Stomach (tissue), 19 donors: ENCODE measurements at regions of chr20 and their contacts with region 1.

Region 1: GRCh38 chr20:19212821-19213502 is 520 bp downstream of the SLC24A3 start:
- DNase-seq: peak; percentile 83 to 92
- H3K4me3 ChIP-seq: peak overlapping the region; percentile 54 to 76 (median 64)
- H3K27ac ChIP-seq: peak overlapping the region; percentile 47 to 75 (median 72)
- H3K4me1 ChIP-seq: peaks cover 6 to 38% (median 23%) of the 10 kb centered on the region in 4 donors
- H3K27me3 ChIP-seq: peaks cover 0 to 32% (median 10%) of the 10 kb centered on the region in 3 donors
- CTCF ChIP-seq: peak in 5 of 7 experiments; percentile 28 to 53 (median 35)
- EP300 ChIP-seq: no peak
- POLR2A ChIP-seq: no peak

Region 2: DNA sequence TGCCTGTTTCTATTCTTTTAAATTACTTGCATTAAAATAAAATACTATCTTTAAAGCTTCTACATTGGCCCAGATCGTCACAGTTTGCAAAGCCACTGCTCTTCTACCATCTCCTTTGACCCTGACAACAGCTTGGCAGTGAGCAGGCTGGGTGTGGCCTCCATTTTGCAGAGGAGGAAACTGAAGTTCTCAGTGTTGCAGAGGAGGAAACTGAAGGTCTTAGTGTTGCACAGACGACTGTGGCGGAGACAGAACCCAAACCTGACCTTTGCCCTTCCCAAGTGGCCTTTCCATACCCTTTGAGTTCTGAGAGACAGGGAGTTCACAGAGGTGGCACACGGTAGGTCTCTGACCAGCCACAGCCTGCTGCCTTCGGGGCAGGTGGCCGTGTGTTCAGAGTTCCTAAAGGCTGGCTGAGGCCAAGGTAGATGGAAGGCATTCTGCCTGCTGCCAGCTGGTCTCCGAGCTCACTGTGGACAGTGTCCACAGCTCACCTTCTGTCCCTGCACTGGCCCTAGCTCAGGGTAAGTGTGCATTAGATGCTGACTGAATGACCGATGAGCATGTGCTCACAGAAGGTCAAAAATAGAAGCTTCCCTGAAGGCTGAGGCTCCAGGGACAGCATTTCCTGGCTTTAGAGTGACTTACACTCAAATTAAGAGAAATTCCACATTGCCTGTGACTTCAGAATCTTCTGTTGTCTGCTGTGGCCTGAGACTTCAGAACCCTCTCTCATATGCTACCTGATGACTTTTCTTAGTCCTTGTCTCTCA is 114.0 kb before region 1 on chr20:
- intact Hi-C with region 1: no loop called
- DNase-seq: no peak
- H3K4me3 ChIP-seq: no peak overlapping the region
- H3K27ac ChIP-seq: no peak overlapping the region
- H3K4me1 ChIP-seq: no peaks in the 10 kb centered on the region
- H3K27me3 ChIP-seq: no peaks in the 10 kb centered on the region
- CTCF ChIP-seq: no peak
- EP300 ChIP-seq: no peak
- POLR2A ChIP-seq: no peak

Region 3: DNA sequence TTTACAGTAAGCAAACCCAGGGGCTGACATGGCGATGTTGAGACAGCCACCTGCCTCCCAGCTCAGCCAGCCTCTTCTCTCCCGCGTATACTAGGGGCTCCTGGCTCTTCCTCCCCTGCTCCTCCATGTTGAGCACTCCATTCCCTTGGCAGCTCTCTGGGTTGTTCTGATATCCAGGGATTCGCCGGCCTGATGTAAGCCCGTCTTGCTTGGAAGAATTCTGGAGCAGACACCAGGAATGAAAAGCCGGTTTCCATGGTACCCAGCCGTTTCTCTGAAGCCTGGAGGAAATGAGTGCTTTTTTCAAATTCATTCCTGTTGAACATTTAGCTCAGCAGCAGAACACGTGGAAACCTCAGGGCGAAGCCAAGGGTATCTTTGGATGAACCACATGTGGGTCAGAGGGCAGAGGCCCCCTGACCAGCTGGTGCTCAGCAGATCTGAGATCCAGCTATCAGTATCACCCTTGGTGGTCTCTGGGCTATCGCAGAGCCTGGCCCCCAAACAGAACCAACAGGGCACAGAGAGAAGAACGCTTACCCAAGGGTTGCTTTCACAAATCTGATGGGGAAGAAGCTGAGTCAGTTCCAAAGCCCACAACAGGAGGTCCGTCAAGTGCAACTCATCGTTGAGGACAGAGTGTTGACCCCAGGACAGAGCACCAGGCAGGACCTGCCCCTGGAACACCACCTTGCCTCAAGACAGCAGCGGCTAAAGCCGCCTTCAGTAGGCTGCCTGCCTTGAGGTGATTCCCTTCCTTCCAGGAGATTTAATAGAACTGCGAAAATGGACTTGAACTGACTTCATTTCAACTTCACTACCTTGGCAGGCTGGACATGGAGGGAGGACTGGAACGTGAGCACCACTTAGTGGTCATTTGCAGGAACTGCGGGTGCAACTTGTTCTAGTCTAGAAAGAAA is 449.0 kb after region 1 on chr20:
- intact Hi-C with region 1: loop called (anchors 10 kb)
- DNase-seq: peak; percentile 71 to 92
- H3K4me3 ChIP-seq: no peak overlapping the region
- H3K27ac ChIP-seq: no peak overlapping the region
- H3K4me1 ChIP-seq: peaks cover 0 to 8% (median 4%) of the 10 kb centered on the region in 4 donors
- H3K27me3 ChIP-seq: peaks cover 0 to 6% (median 0%) of the 10 kb centered on the region in 3 donors
- CTCF ChIP-seq: peak in 6 of 7 experiments; percentile 32 to 98 (median 96)
- EP300 ChIP-seq: no peak
- POLR2A ChIP-seq: no peak